Activated CD4-positive, alpha-beta memory T cell treated with anti-CD3 and anti-CD28 coated beads, Interleukin-2, amount 10 ng/mL, durations not matched to agents 7 days and 5 days (primary cell): ENCODE measurements at regions of chr15 and their contacts with region 1.

Region 1: GRCh38 chr15:34367101-34368081 is at the start of gene LPCAT4:
- DNase-seq: peak; percentile 93
- H3K4me3 Mint-ChIP-seq: peak within 1 kb of the TSS; percentile 99
- H3K27ac Mint-ChIP-seq: peak within 1 kb of the TSS; percentile 98
- H3K4me1 Mint-ChIP-seq: peaks cover 50% of the 10 kb centered on the region
- H3K27me3 Mint-ChIP-seq: no peaks in the 10 kb centered on the region
- total RNA-seq, gene LPCAT4: 109 to 117 TPM

Region 2: DNA sequence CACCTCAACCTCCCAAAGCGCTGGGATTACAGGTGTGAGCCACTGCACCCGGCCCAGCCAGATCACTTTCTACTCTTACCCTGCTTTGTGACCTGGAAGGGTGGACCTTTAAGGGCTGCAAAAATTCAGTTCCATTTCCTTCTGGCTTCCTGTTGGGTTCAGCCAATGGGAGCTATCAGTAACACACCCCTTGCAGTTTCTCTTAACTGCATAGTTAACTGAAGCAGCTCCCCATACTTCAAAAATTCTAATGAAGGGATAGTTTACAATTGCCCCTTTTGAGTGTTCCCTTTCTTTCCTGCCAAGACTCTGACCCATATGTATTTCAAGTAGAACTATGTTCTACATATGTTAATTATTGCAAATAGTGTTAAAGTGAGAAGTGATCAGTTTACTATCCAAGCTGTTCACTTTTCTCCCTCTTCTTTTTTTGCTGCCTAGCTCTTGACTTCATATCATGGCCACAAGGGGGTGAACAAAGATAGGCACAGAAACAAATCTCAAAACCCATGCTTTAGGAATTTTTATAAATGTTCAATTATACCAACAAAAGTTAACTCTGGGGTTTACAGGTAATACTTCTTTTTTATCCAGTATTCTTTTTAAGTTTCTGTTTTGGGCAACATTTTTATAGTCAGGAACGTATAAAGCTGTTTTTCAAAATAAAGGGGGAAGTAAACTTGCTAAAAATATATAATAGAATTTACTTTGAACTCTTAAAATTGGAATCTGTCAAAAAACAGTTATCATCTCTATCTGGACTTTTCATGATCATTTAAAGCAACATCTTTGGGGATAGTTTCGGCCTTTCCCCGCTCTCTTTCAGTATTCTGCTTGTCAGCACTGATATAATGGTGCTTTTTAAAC is 257.4 kb before region 1 on chr15:
- CTCF ChIA-PET with region 1: interaction called, 10 read pairs
- POLR2A ChIA-PET with region 1: interaction called, 8 read pairs
- DNase-seq: no peak
- H3K4me3 Mint-ChIP-seq: no peak overlapping the region
- H3K27ac Mint-ChIP-seq: no peak overlapping the region
- H3K4me1 Mint-ChIP-seq: peaks cover 6% of the 10 kb centered on the region
- H3K27me3 Mint-ChIP-seq: no peaks in the 10 kb centered on the region

Region 3: GRCh38 chr15:34182942-34183341 is 184.4 kb before region 1 on chr15:
- CTCF ChIA-PET with region 1: no interaction called
- POLR2A ChIA-PET with region 1: no interaction called
- DNase-seq: no peak
- H3K4me3 Mint-ChIP-seq: no peak overlapping the region
- H3K27ac Mint-ChIP-seq: no peak overlapping the region
- H3K4me1 Mint-ChIP-seq: no peaks in the 10 kb centered on the region
- H3K27me3 Mint-ChIP-seq: no peaks in the 10 kb centered on the region

Region 4: GRCh38 chr15:34223904-34224596 is 143.3 kb before region 1 on chr15:
- CTCF ChIA-PET with region 1: interaction called, 14 read pairs
- POLR2A ChIA-PET with region 1: interaction called, 3 read pairs
- DNase-seq: no peak
- H3K4me3 Mint-ChIP-seq: peak overlapping the region; percentile 87
- H3K27ac Mint-ChIP-seq: peak overlapping the region; percentile 95
- H3K4me1 Mint-ChIP-seq: peaks cover 36% of the 10 kb centered on the region
- H3K27me3 Mint-ChIP-seq: peaks cover 1% of the 10 kb centered on the region

Region 5: DNA sequence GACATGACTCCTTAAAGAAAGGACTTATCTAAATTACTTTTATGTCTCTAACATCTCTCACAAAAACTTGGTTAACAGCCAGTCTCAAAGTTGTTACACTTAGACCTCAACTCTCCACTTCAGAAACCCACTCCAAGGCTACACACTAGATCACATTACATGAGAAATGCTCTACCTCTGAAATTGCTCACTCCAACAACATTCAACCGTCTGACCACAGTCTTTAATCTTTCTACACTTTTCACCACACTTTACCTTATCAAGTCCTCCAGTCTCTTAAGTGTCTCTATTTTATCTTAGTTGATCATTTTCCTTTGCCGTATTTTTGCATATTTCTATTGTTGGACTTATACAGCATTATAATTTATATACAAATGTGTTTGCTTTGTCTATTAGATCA is 35.6 kb before region 1 on chr15:
- CTCF ChIA-PET with region 1: interaction called, 42 read pairs
- POLR2A ChIA-PET with region 1: interaction called, 92 read pairs
- DNase-seq: no peak
- H3K4me3 Mint-ChIP-seq: peak overlapping the region; percentile 0
- H3K27ac Mint-ChIP-seq: peak overlapping the region; percentile 75
- H3K4me1 Mint-ChIP-seq: peaks cover 83% of the 10 kb centered on the region
- H3K27me3 Mint-ChIP-seq: no peaks in the 10 kb centered on the region

Region 6: DNA sequence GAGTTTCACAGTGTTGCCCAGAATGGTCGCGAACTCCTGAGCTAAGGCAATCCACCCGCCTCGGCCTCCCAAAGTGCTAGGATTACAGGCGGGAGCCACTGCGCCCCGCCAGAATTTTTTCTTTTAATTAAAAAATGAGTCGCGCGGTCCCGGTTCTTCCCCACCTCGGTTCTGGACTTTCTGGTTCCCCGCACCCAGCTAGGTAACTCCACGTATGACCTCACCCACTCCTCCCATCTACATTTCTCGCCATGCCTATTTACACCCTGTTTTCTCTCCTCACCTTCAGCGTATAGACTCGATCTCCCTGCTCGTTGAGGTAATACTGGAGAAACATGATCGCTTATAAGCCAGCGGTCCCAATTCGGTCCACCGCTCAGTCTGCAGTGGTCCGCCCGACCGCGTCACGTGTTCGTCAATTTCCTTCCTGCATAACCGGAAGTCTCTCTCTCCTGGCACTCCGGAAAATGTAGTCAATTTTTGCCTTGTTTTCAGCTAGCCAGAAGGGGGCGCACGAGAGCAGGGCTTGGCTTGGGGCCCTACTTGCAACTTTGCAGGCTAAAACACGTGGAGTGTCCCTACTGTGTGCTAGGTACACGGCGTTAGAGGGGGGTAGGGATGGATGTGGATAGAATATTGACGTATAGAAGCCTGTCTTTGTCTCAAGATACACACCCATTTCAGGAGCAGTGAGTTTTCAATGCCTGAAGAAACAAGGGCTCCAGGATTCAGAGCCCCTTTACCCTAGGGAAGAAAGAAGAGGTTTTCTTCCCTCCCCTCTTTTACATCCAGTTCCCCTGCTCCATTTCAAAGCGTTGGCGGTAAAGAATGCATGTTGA is 24.4 kb before region 1 on chr15 and contains the starts of genes NOP10 and NUTM1:
- CTCF ChIA-PET with region 1: interaction called, 60 read pairs
- POLR2A ChIA-PET with region 1: interaction called, 92 read pairs
- DNase-seq: peak; percentile 95
- H3K4me3 Mint-ChIP-seq: no peak within 1 kb of the TSS
- H3K27ac Mint-ChIP-seq: peak within 1 kb of the TSS; percentile 74
- H3K4me1 Mint-ChIP-seq: peaks cover 26% of the 10 kb centered on the region
- H3K27me3 Mint-ChIP-seq: no peaks in the 10 kb centered on the region
- total RNA-seq, gene NOP10: 170 to 183 TPM
- total RNA-seq, gene NUTM1: not detected

Region 7: DNA sequence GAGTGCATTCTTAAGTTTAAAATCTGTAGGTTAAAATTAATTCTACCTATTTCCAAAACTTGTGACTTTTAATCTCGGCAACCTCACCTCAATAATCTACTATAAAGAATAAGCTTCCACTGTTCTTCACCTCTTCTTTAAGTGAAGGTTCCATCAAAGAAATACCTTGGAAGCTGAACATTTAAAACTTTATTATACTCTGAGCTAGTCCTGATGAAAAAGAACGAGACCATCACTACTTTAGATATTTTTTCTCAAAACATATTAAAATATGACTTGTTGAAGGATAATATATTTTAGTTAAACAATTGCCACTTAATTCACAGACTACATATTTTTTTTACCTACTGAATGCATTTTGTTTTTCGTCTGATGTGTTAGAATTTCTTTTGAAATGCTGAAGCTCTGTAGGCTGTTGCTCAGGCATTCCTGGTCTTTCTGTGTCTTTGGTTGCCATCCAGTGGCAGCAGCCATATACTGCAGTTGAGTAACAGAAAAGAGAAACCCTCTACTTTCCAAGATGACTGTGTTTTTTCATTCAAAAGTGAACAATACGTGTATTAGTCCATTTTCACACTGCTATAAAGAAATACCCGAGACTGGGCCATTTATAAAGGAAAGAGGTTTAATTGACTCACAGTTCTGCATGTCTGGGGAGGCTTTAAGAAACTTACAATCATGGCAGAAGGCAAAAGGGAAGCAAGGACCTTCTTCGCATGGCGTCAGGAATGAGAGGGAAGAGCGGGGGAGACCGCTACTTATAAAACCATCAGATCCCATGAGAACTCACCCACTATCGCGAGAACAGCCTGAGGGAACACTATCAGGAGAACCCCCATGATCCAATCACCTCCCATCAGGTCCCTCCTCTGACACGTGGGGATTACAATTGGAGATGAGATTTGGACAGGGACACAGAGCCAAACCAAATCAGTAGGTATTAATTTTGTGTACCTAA is 220.6 kb after region 1 on chr15:
- CTCF ChIA-PET with region 1: interaction called, 34 read pairs
- POLR2A ChIA-PET with region 1: interaction called, 53 read pairs
- DNase-seq: peak; percentile 74
- H3K4me3 Mint-ChIP-seq: peak overlapping the region; percentile 64
- H3K27ac Mint-ChIP-seq: no peak overlapping the region
- H3K4me1 Mint-ChIP-seq: peaks cover 27% of the 10 kb centered on the region
- H3K27me3 Mint-ChIP-seq: peaks cover 23% of the 10 kb centered on the region